PC-9 (cell line): ENCODE measurements at regions of chr5 and their contacts with region 1.

Region 1: DNA sequence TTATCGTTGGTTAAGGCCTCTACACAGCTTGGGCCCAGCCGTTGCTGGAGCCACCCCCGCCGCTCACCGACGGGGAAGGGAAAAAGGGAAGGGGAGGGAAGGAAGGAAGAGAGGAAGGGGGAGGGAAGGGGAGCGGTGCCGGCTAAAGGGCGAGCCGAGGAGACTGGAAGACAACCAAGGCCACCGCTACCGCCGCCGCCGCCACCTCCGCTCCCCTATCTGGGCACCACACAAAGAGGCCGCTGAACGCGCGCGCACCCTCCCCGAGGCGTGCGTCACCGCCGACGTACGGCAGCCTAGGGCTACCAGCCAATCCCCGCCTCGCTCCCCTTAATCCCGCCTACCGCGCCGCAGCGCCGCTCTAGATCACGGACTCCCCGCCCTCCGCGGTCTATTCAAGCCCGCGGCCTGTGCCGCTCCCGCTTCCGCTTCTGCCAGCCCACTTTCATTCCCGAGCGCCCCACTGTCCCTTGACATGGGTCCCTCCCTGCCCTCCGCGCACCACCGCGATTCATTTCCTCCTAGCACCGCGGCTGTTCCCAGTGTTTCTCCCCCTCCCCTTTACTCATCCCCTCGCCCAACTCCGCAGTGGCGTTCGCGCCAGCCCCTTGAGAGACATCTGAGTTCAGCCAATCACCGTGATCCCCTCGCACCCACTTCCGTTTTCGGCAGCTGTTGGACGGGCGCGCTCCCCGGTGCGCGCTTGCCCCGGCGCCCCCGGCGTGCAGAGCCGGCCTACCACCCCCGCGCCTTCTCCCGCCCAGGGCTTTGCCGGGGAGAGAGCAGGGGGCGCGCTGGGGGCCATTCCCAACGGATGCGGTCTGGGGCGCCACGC is at the start of gene HNRNPA0:
- DNase-seq: peak; percentile 88 to 94
- H3K4me3 ChIP-seq: peak within 1 kb of the TSS; percentile 61
- H3K27ac ChIP-seq: peak within 1 kb of the TSS; percentile 91
- H3K4me1 ChIP-seq: peaks cover 43% of the 10 kb centered on the region
- H3K27me3 ChIP-seq: no peaks in the 10 kb centered on the region
- CTCF ChIP-seq: no peak
- total RNA-seq, gene HNRNPA0: 27.8 and 32.2 TPM in 2 replicates

Region 2: GRCh38 chr5:136014049-136015002 is 1740.0 kb before region 1 on chr5:
- CTCF ChIA-PET with region 1: no interaction called
- POLR2A ChIA-PET with region 1: interaction called, 14 read pairs
- intact Hi-C with region 1: no loop called
- DNase-seq: no peak
- H3K4me3 ChIP-seq: no peak overlapping the region
- H3K27ac ChIP-seq: no peak overlapping the region
- H3K4me1 ChIP-seq: peaks cover 59% of the 10 kb centered on the region
- H3K27me3 ChIP-seq: no peaks in the 10 kb centered on the region
- CTCF ChIP-seq: no peak

Region 3: DNA sequence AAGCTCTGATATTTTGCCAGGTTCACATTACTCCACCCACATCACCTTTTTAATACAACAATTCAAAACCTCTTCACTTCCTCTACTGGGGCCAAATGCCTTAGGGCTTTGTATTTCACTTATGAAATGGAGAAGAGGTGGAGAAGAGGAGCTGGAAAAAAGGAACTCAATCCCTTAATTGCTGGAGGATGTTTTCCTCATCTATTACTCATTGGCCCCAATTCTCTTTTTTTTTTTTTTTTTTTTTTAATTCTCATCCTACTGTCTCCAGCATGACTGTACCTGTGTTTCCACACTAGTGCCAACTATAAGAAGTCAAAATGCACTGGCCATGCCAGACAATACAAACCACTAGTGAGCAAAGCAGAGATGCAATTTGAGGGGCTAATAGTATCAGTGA is 257.6 kb after region 1 on chr5:
- CTCF ChIA-PET with region 1: no interaction called
- POLR2A ChIA-PET with region 1: interaction called, 20 read pairs
- intact Hi-C with region 1: no loop called
- DNase-seq: peak in 1 of 2 experiments; percentile 66
- H3K4me3 ChIP-seq: no peak overlapping the region
- H3K27ac ChIP-seq: no peak overlapping the region
- H3K4me1 ChIP-seq: peaks cover 10% of the 10 kb centered on the region; the same call in 1 of the 2 replicates
- H3K27me3 ChIP-seq: no peaks in the 10 kb centered on the region
- CTCF ChIP-seq: no peak

Region 4: GRCh38 chr5:138065102-138065501 is 310.8 kb after region 1 on chr5:
- CTCF ChIA-PET with region 1: interaction called, 7 read pairs
- POLR2A ChIA-PET with region 1: no interaction called
- intact Hi-C with region 1: loop called (anchors 10 kb)
- DNase-seq: no peak
- H3K4me3 ChIP-seq: no peak overlapping the region
- H3K27ac ChIP-seq: no peak overlapping the region
- H3K4me1 ChIP-seq: no peaks in the 10 kb centered on the region
- H3K27me3 ChIP-seq: no peaks in the 10 kb centered on the region
- CTCF ChIP-seq: no peak; the same call in 1 of the 2 replicates

Region 5: GRCh38 chr5:138542956-138543729 is 788.8 kb after region 1 on chr5 and contains the start of gene ETF1:
- CTCF ChIA-PET with region 1: interaction called, 10 read pairs
- POLR2A ChIA-PET with region 1: no interaction called
- intact Hi-C with region 1: no loop called
- DNase-seq: peak; percentile 96 to 99
- H3K4me3 ChIP-seq: peak within 1 kb of the TSS; percentile 66
- H3K27ac ChIP-seq: peak within 1 kb of the TSS; percentile 77
- H3K4me1 ChIP-seq: peaks cover 45% of the 10 kb centered on the region
- H3K27me3 ChIP-seq: no peaks in the 10 kb centered on the region
- CTCF ChIP-seq: no peak
- total RNA-seq, gene ETF1: 61.8 and 84.9 TPM in 2 replicates